ENCODE measurements at regions of chr7 and their contacts with region 1.

Region 1: DNA sequence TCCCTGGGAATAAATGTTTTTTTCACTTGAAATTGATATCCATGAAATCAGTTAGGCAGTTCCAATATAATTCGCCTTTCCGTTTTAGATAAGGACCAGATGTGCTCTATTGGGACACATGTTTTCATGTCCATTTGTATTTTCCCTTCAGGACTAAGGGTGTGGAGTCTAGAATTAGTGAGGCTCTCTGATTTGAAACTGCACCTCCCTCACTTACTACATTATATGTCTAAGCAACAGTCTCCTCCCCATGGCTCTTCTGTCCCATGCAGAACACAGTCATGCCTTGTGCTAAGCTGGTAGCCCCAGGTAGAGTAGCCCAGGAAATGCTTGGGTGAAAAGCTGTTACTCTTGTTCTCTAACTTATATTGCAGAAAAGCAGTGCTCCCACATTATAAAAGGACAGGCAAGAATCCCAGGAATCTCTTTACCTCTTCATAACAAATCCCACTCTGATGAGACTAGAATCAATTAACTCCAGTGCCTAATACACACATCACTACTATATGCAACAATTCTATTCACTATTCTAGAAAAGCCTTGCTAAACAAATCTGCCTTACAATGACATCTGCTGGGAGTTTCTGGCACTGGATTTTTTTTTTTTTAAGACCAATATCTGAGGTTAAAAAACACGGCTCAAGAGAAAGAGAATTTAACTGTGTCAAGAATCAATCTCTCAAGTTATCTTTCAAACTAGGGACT is 293.9 kb downstream of the SNX13 start:
- DNase-seq: peak; percentile 43
- H3K4me3 Mint-ChIP-seq: no peak overlapping the region
- H3K27ac Mint-ChIP-seq: no peak overlapping the region
- H3K4me1 Mint-ChIP-seq: peaks cover 19% of the 10 kb centered on the region
- H3K27me3 Mint-ChIP-seq: no peaks in the 10 kb centered on the region
- CTCF ChIP-seq: peak; percentile 51

Region 2: DNA sequence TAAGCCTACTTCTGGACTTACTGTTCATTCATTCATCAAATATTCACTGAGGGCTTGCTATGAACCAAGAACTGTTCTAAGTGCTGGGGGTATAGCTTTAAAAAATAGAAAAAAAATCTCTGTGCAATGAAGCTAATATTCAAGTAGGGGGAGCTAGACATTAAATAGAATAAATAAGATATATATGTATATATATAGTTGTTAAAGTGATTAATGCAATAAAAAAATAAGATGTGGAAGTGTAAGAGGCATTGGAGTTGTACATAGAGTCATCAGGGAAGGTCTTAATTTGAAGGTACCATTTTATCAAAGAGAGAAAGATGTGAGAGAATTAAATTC is 583.4 kb before region 1 on chr7:
- CTCF ChIA-PET with region 1: interaction called, 3 read pairs
- POLR2A ChIA-PET with region 1: no interaction called
- intact Hi-C with region 1: loop called (anchors 1 kb)
- DNase-seq: peak; percentile 23
- H3K4me3 Mint-ChIP-seq: no peak overlapping the region
- H3K27ac Mint-ChIP-seq: no peak overlapping the region
- H3K4me1 Mint-ChIP-seq: no peaks in the 10 kb centered on the region
- H3K27me3 Mint-ChIP-seq: no peaks in the 10 kb centered on the region
- CTCF ChIP-seq: peak; percentile 26

Region 3: GRCh38 chr7:17408245-17408903 is 238.0 kb before region 1 on chr7:
- CTCF ChIA-PET with region 1: interaction called, 3 read pairs
- POLR2A ChIA-PET with region 1: interaction called, 3 read pairs
- intact Hi-C with region 1: loop called (anchors 1 kb)
- DNase-seq: peak; percentile 97
- H3K4me3 Mint-ChIP-seq: peak overlapping the region; percentile 48
- H3K27ac Mint-ChIP-seq: peak overlapping the region; percentile 90
- H3K4me1 Mint-ChIP-seq: peaks cover 34% of the 10 kb centered on the region
- H3K27me3 Mint-ChIP-seq: no peaks in the 10 kb centered on the region
- CTCF ChIP-seq: no peak

Region 4: DNA sequence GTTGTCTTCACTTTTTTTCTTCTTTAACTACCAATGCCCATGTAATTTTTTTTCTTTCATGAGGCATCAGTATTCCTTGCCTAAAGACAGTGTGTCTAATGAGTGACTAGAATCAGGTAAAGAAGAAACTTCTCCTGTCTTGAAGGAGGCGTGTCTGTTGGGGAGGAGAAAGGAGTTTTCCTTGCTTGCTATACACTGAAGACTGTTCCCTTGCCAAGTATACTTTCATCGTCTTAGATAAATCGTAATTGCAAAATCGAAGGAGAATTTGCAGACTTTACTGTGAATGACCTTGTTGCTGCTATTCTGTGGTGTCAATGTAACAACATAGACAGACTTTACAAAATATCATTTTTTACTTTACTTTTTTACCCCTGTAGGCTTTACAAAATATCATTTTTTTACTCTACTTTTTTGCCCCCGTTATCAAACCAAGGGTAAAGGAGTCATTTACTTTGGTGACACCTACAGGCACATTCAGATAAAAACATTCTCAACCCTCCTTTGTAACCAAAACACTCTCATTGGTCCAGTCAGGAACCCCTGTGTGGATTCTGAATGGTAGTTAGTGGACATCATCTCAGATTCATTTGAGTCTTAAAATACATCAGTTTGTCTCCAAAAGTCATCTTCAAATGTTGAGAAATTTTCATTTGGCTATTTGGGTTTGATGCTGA is 115.5 kb before region 1 on chr7:
- CTCF ChIA-PET with region 1: interaction called, 18 read pairs
- POLR2A ChIA-PET with region 1: interaction called, 3 read pairs
- intact Hi-C with region 1: loop called (anchors 5 kb)
- DNase-seq: peak; percentile 44
- H3K4me3 Mint-ChIP-seq: no peak overlapping the region
- H3K27ac Mint-ChIP-seq: peak overlapping the region; percentile 52
- H3K4me1 Mint-ChIP-seq: peaks cover 45% of the 10 kb centered on the region
- H3K27me3 Mint-ChIP-seq: no peaks in the 10 kb centered on the region
- CTCF ChIP-seq: peak; percentile 17

Region 5: DNA sequence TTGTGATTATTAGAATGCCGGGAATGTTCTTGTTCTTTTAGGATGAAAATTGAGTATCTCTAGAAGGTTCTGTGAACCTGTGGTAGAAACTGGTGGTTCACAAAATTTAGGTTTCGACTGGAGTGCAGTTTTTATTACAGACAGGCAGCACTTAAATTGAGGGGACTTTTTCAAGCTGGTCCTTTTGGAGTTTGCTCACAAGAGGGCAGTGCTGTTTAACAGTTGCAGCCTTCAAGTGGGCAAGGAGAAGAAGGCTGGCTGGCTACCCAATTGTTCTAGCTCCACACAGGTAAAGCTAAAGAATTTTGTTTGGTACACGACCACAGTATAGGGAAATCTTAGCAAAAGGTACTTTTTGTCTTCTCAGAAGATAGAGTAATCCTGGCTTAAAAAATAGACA is 60.3 kb after region 1 on chr7:
- CTCF ChIA-PET with region 1: no interaction called
- POLR2A ChIA-PET with region 1: no interaction called
- intact Hi-C with region 1: no loop called
- DNase-seq: peak; percentile 83
- H3K4me3 Mint-ChIP-seq: no peak overlapping the region
- H3K27ac Mint-ChIP-seq: peak overlapping the region; percentile 55
- H3K4me1 Mint-ChIP-seq: peaks cover 7% of the 10 kb centered on the region
- H3K27me3 Mint-ChIP-seq: no peaks in the 10 kb centered on the region
- CTCF ChIP-seq: peak; percentile 67

Region 6: GRCh38 chr7:18086165-18087030 is 440.0 kb after region 1 on chr7:
- CTCF ChIA-PET with region 1: no interaction called
- POLR2A ChIA-PET with region 1: no interaction called
- intact Hi-C with region 1: no loop called
- DNase-seq: peak; percentile 17
- H3K4me3 Mint-ChIP-seq: peak overlapping the region; percentile 77
- H3K27ac Mint-ChIP-seq: no peak overlapping the region
- H3K4me1 Mint-ChIP-seq: peaks cover 6% of the 10 kb centered on the region
- H3K27me3 Mint-ChIP-seq: no peaks in the 10 kb centered on the region
- CTCF ChIP-seq: no peak